ENCODE measurements at regions of chr4 and their contacts with region 1.

Region 1: GRCh38 chr4:174764105-174764729 is 64.8 kb downstream of the GLRA3 start:
- DNase-seq: peak; percentile 34 to 65 (median 38)
- ATAC-seq: peak; percentile 88
- H3K4me3 ChIP-seq: no peak overlapping the region
- H3K27ac ChIP-seq: no peak overlapping the region
- H3K4me1 ChIP-seq: no peaks in the 10 kb centered on the region
- H3K27me3 ChIP-seq: no peaks in the 10 kb centered on the region
- CTCF ChIP-seq: peak; percentile 39 to 65 (median 48); a peak in 5 of 6 replicates
- EP300 ChIP-seq: no peak
- POLR2A ChIP-seq: no peak
- RAD21 ChIP-seq: peak; percentile 34 to 71; a peak in 3 of 4 replicates

Region 2: GRCh38 chr4:174828845-174829701 is 64.9 kb after region 1 on chr4 and contains the start of gene GLRA3:
- CTCF ChIA-PET with region 1: no interaction called
- POLR2A ChIA-PET with region 1: no interaction called
- in situ Hi-C with region 1: no loop called
- intact Hi-C with region 1: loop called (anchors 5 kb)
- DNase-seq: peak; percentile 81 to 88 (median 84)
- ATAC-seq: peak; percentile 99
- H3K4me3 ChIP-seq: peak within 1 kb of the TSS; percentile 36
- H3K27ac ChIP-seq: peak within 1 kb of the TSS; percentile 49; the same call in 2 of the 3 replicates
- H3K4me1 ChIP-seq: peaks cover 0 to 4% of the 10 kb centered on the region in 2 experiments; a peak in 2 of 5 replicates
- H3K27me3 ChIP-seq: no peaks in the 10 kb centered on the region
- CTCF ChIP-seq: no peak
- EP300 ChIP-seq: no peak
- POLR2A ChIP-seq: no peak
- RAD21 ChIP-seq: no peak
- polyA plus RNA-seq, gene GLRA3: 0.08 to 0.10 TPM

Region 3: GRCh38 chr4:175536852-175537453 is 772.7 kb after region 1 on chr4:
- CTCF ChIA-PET with region 1: no interaction called
- POLR2A ChIA-PET with region 1: no interaction called
- in situ Hi-C with region 1: no loop called
- intact Hi-C with region 1: loop called (anchors 2 kb)
- DNase-seq: peak; percentile 10 to 30 (median 20)
- ATAC-seq: no peak
- H3K4me3 ChIP-seq: no peak overlapping the region
- H3K27ac ChIP-seq: no peak overlapping the region
- H3K4me1 ChIP-seq: no peaks in the 10 kb centered on the region
- H3K27me3 ChIP-seq: no peaks in the 10 kb centered on the region
- CTCF ChIP-seq: peak in 1 of 3 experiments; percentile 41; a peak in 2 of 6 replicates
- EP300 ChIP-seq: no peak
- POLR2A ChIP-seq: no peak
- RAD21 ChIP-seq: peak; percentile 46 to 50

Measured in K562 (cell line).